ENCODE measurements at regions of chr1 and their contacts with region 1.

Region 1: GRCh38 chr1:27416387-27417111 is 24.1 kb downstream of the GPR3 start:
- DNase-seq: peak; percentile 73
- H3K4me3 Mint-ChIP-seq: no peak overlapping the region
- H3K27ac Mint-ChIP-seq: peak overlapping the region; percentile 19
- H3K4me1 Mint-ChIP-seq: peaks cover 12% of the 10 kb centered on the region
- H3K27me3 Mint-ChIP-seq: no peaks in the 10 kb centered on the region
- CTCF ChIP-seq: peak; percentile 58

Region 2: GRCh38 chr1:27388337-27389005 is 28.1 kb before region 1 on chr1:
- CTCF ChIA-PET with region 1: no interaction called
- POLR2A ChIA-PET with region 1: no interaction called
- intact Hi-C with region 1: no loop called
- DNase-seq: peak; percentile 79
- H3K4me3 Mint-ChIP-seq: no peak overlapping the region
- H3K27ac Mint-ChIP-seq: no peak overlapping the region
- H3K4me1 Mint-ChIP-seq: peaks cover 8% of the 10 kb centered on the region
- H3K27me3 Mint-ChIP-seq: no peaks in the 10 kb centered on the region
- CTCF ChIP-seq: peak; percentile 75

Region 3: GRCh38 chr1:27517907-27518718 is 101.6 kb after region 1 on chr1:
- CTCF ChIA-PET with region 1: no interaction called
- POLR2A ChIA-PET with region 1: interaction called, 3 read pairs
- intact Hi-C with region 1: loop called (anchors 1 kb)
- DNase-seq: peak; percentile 74
- H3K4me3 Mint-ChIP-seq: no peak overlapping the region
- H3K27ac Mint-ChIP-seq: peak overlapping the region; percentile 39
- H3K4me1 Mint-ChIP-seq: peaks cover 43% of the 10 kb centered on the region
- H3K27me3 Mint-ChIP-seq: no peaks in the 10 kb centered on the region
- CTCF ChIP-seq: no peak